Heart right ventricle (tissue), 16 donors: ENCODE measurements at regions of chr14 and their contacts with region 1.

Region 1: DNA sequence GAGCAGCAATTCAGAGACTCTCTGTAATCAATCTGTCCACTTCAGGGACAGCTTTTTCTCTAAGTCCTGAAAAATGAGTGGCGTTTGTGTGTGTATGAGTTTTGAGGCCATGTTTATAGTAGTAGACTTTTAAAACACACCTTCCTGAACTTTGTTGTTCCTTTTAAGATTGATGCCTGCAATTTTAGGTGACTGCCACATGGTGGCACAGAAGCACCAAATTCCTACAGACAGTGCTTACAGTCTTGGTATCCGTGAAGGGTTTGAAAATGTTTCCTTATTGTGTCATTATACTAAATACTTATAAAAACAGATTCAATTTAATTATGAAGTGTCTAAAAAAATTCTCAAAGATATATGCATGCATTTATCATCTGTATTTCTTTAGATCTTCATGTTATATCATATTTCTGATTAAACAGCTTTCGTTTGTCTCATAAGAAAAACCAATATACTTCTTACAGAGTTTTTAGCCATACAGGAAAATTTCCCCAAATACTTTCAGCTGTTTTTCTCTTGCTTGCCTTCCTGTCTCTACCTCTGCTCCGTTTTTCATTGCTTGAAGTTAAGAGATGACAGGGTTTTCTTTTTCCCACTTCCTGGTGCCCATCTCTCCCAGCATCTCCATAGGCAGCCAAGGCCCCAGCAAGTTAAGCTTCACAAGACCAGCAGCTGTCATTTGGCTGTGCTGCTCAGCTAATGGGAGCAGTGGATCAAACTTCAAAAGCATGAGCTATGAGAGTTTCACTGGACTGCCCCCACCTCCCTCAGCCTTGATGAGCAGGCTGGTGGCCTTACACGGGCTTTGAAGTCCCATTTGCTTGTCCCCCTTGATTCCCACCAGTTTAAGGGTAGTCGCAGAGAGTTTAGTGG is 259.6 kb downstream of the AKAP6 start:
- DNase-seq: no peak
- ATAC-seq: no peak
- H3K4me3 ChIP-seq: no peak overlapping the region
- H3K27ac ChIP-seq: no peak overlapping the region
- H3K4me1 ChIP-seq: peaks cover 0 to 35% (median 10%) of the 10 kb centered on the region in 9 donors
- H3K27me3 ChIP-seq: no peaks in the 10 kb centered on the region
- CTCF ChIP-seq: peak in 8 of 9 donors; percentile 12 to 63 (median 38)

Region 2: DNA sequence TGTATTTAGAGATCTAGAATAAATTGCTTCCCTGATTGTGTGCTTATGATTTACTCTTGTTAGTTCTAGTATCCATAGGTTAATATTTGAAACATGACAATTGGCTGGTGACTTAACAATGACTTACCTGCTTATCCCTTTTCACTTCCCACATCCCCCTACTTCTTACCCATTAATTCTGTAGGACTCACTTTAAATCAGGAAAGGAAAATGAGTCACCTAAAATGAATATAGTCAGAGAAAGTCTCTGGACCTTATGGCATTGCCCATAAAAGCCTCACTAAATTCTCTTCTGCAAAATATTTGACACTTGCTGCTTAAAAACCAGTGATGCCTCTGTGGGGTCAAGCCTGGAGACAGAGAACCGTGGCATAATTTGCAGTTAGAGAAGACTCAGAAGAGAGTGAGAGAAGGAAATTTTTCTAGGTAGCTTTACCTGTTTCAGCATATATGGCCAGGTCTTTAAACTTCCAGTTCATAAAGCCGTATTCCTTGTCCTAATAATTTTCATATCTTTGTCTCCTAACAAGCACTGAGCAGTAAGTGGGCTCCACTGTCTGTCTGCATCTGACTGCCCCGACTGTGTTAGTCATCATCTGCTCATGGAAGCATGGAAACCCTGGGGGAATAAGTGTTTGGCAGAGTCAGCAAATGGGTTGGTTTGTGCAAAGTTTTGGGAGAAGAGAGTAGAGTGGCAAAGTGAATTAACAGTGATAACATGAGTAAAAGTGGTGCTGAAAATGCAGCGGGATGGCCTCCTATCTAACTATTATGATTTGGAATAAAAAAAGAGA is 34.8 kb after region 1 on chr14:
- intact Hi-C with region 1: no loop called
- DNase-seq: no peak
- ATAC-seq: peak in 1 of 8 donors; percentile 35
- H3K4me3 ChIP-seq: no peak overlapping the region
- H3K27ac ChIP-seq: peak overlapping the region in 1 of 10 donors; percentile 44
- H3K4me1 ChIP-seq: peaks cover 0 to 64% (median 15%) of the 10 kb centered on the region in 9 donors
- H3K27me3 ChIP-seq: no peaks in the 10 kb centered on the region
- CTCF ChIP-seq: no peak

Region 3: GRCh38 chr14:32826404-32827082 is 237.9 kb after region 1 on chr14:
- intact Hi-C with region 1: loop called in 1 of 10 experiments (anchors 5 kb)
- DNase-seq: peak in 1 of 2 donors; percentile 29
- ATAC-seq: peak; percentile 31 to 79 (median 73)
- H3K4me3 ChIP-seq: no peak overlapping the region
- H3K27ac ChIP-seq: peak overlapping the region in 6 of 10 donors; percentile 18 to 68 (median 28)
- H3K4me1 ChIP-seq: peaks cover 0 to 67% (median 29%) of the 10 kb centered on the region in 9 donors
- H3K27me3 ChIP-seq: no peaks in the 10 kb centered on the region
- CTCF ChIP-seq: peak in 5 of 9 donors; percentile 18 to 45 (median 43)

Region 4: DNA sequence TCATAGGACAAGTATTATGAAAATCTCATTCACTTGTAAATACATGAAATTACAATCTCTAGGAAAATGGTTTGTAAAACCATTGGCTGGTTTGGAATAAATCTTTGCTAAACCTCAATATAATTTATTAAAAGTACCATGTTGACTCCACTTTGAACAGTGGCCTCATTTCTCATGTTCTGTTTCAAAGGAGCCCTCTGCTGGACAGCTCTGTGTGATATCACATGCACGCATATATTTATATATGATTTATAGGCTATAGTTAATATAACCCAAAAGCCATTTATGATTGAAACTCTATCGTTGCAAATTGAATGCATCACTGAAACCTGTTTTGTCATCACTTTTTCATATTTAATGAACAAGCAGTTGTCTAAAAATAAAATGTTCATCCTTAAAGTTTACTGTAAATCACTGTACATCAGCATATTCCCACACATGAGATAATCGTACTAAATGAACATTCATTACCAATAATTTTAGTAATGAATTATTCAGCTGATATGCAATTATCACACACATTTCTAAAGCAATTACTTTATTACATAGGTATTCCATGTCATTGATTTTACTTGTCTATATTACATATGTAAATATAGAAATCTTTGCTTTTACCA is 843.8 kb after region 1 on chr14:
- intact Hi-C with region 1: loop called in 1 of 10 experiments (anchors 5 kb)
- DNase-seq: no peak
- ATAC-seq: no peak
- H3K4me3 ChIP-seq: no peak overlapping the region
- H3K27ac ChIP-seq: no peak overlapping the region
- H3K4me1 ChIP-seq: peaks cover 0 to 7% (median 0%) of the 10 kb centered on the region in 9 donors
- H3K27me3 ChIP-seq: no peaks in the 10 kb centered on the region
- CTCF ChIP-seq: peak in 8 of 9 donors; percentile 22 to 55 (median 52)

Region 5: GRCh38 chr14:34322940-34323418 is 1734.3 kb after region 1 on chr14:
- intact Hi-C with region 1: loop called in 1 of 10 experiments (anchors 10 kb)
- DNase-seq: peak; percentile 51
- ATAC-seq: peak in 7 of 8 donors; percentile 51 to 71 (median 68)
- H3K4me3 ChIP-seq: no peak overlapping the region
- H3K27ac ChIP-seq: no peak overlapping the region
- H3K4me1 ChIP-seq: peaks cover 0 to 12% (median 0%) of the 10 kb centered on the region in 9 donors
- H3K27me3 ChIP-seq: no peaks in the 10 kb centered on the region
- CTCF ChIP-seq: peak; percentile 54 to 79 (median 75)